ENCODE measurements at regions of chr7 and their contacts with region 1.

Region 1: GRCh38 chr7:94129443-94130140 is 125.4 kb upstream of the BET1 start:
- DNase-seq: no peak
- ATAC-seq: no peak
- H3K4me3 ChIP-seq: no peak overlapping the region
- H3K27ac ChIP-seq: no peak overlapping the region
- H3K4me1 ChIP-seq: no peaks in the 10 kb centered on the region
- H3K27me3 ChIP-seq: no peaks in the 10 kb centered on the region
- CTCF ChIP-seq: no peak
- EP300 ChIP-seq: no peak
- POLR2A ChIP-seq: no peak
- RAD21 ChIP-seq: no peak

Region 2: GRCh38 chr7:94100723-94101345 is 28.8 kb before region 1 on chr7:
- CTCF ChIA-PET with region 1: no interaction called
- POLR2A ChIA-PET with region 1: interaction called, 3 read pairs
- RAD21 ChIA-PET with region 1: interaction called, 4 read pairs
- SMC1A ChIA-PET with region 1: interaction called, 17 read pairs
- in situ Hi-C with region 1: no loop called
- intact Hi-C with region 1: no loop called
- DNase-seq: no peak
- ATAC-seq: no peak
- H3K4me3 ChIP-seq: no peak overlapping the region
- H3K27ac ChIP-seq: no peak overlapping the region
- H3K4me1 ChIP-seq: no peaks in the 10 kb centered on the region
- H3K27me3 ChIP-seq: no peaks in the 10 kb centered on the region
- CTCF ChIP-seq: no peak
- EP300 ChIP-seq: no peak
- POLR2A ChIP-seq: no peak
- RAD21 ChIP-seq: no peak

Region 3: GRCh38 chr7:94142281-94142680 is 12.7 kb after region 1 on chr7:
- CTCF ChIA-PET with region 1: interaction called, 9 read pairs
- POLR2A ChIA-PET with region 1: interaction called, 4 read pairs
- RAD21 ChIA-PET with region 1: interaction called, 4 read pairs
- SMC1A ChIA-PET with region 1: interaction called, 20 read pairs
- in situ Hi-C with region 1: no loop called
- intact Hi-C with region 1: no loop called
- DNase-seq: no peak
- ATAC-seq: no peak
- H3K4me3 ChIP-seq: no peak overlapping the region; the same call in 1 of the 2 replicates
- H3K27ac ChIP-seq: no peak overlapping the region
- H3K4me1 ChIP-seq: no peaks in the 10 kb centered on the region
- H3K27me3 ChIP-seq: no peaks in the 10 kb centered on the region; a peak in 1 of 4 replicates
- CTCF ChIP-seq: no peak
- EP300 ChIP-seq: no peak
- POLR2A ChIP-seq: no peak
- RAD21 ChIP-seq: no peak

Region 4: DNA sequence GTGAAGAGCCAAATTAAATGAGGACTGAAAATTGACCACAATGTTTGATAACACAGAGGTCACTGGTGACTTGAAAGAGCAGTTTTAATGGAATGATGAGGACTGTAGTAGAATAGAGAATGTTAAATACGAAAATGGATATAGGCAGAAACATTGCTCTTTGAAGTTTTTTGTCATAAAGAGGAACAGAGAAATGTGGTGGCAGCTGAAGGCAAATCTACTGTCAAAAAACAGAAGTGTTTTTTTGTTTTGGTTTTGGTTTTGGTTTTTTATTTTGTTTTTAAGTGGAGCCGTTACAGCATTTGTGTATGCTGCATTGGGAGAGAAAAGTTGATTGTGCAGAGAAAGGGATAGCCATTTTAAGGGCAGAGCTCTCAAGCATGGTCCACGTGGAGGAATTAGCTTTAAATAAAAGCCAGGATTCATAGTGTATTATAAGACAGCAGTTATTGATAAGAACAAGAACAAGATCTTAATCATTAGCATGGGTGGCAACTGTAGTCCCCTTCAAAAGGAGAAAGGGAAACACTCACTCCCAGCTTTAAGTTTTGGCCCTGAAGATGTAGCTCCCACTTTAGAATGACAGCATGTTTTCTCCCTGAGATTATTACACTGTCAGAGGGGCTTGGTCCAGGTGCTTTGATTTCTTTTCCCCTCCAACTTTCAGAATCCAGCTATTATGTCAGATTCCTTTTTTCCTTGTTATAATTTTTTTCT is 31.3 kb after region 1 on chr7:
- CTCF ChIA-PET with region 1: interaction called, 5 read pairs
- POLR2A ChIA-PET with region 1: interaction called, 6 read pairs
- RAD21 ChIA-PET with region 1: interaction called, 18 read pairs
- SMC1A ChIA-PET with region 1: interaction called, 27 read pairs
- in situ Hi-C with region 1: no loop called
- intact Hi-C with region 1: no loop called
- DNase-seq: peak; percentile 83
- ATAC-seq: peak; percentile 97
- H3K4me3 ChIP-seq: peak overlapping the region; percentile 25; the same call in 1 of the 2 replicates
- H3K27ac ChIP-seq: peak overlapping the region; percentile 37
- H3K4me1 ChIP-seq: peaks cover 6% of the 10 kb centered on the region
- H3K27me3 ChIP-seq: no peaks in the 10 kb centered on the region
- CTCF ChIP-seq: no peak
- EP300 ChIP-seq: peak; percentile 98 to 99
- POLR2A ChIP-seq: no peak
- RAD21 ChIP-seq: no peak

Region 5: DNA sequence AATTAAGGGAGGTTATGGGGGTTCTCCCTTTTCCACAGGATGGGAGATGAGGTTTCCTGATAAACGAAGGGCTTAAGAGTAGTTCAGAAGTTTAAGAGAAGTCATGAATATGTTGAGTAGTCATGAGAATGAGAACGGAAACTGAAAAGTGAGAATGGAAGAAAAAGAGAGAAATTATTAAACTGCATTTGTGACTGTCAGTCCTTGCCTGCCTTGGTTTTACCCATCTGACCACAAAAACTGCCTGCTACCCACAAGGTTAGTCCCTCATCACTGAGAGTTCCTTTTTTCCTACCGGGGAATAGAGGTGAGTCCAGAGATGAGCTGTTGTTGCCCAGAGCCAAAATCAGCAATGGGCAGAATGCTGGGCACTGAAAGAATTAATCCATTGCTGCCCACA is 48.6 kb after region 1 on chr7:
- CTCF ChIA-PET with region 1: interaction called, 5 read pairs
- POLR2A ChIA-PET with region 1: interaction called, 3 read pairs
- RAD21 ChIA-PET with region 1: interaction called, 3 read pairs
- SMC1A ChIA-PET with region 1: interaction called, 10 read pairs
- in situ Hi-C with region 1: no loop called
- intact Hi-C with region 1: no loop called
- DNase-seq: peak; percentile 75
- ATAC-seq: peak; percentile 96
- H3K4me3 ChIP-seq: peak overlapping the region; percentile 17; the same call in 1 of the 2 replicates
- H3K27ac ChIP-seq: no peak overlapping the region
- H3K4me1 ChIP-seq: peaks cover 9% of the 10 kb centered on the region
- H3K27me3 ChIP-seq: no peaks in the 10 kb centered on the region
- CTCF ChIP-seq: no peak
- EP300 ChIP-seq: peak; percentile 45 to 77; a peak in 3 of 4 replicates
- POLR2A ChIP-seq: no peak
- RAD21 ChIP-seq: no peak

Region 6: DNA sequence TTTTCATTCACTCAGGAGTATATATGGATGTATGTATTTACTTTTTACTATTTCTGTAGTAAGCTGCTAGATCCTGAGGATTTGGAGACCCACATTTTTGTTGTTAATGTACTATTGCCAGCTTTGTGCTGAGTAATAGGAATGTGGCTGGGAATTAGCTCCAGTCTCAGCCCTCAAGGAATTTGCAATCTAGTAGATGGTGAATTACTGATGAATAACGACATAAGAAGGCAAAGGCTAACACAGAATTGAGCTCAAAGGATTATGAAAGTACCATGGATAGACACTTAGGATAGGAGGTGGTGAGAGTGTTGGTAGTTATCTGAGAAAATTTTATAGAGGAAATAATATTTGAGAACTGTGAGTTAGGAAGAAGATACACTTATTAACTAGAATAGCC is 399.9 kb after region 1 on chr7:
- CTCF ChIA-PET with region 1: no interaction called
- POLR2A ChIA-PET with region 1: no interaction called
- RAD21 ChIA-PET with region 1: no interaction called
- SMC1A ChIA-PET with region 1: no interaction called
- in situ Hi-C with region 1: no loop called
- intact Hi-C with region 1: no loop called
- DNase-seq: no peak
- ATAC-seq: no peak
- H3K4me3 ChIP-seq: no peak overlapping the region
- H3K27ac ChIP-seq: no peak overlapping the region
- H3K4me1 ChIP-seq: no peaks in the 10 kb centered on the region
- H3K27me3 ChIP-seq: no peaks in the 10 kb centered on the region
- CTCF ChIP-seq: no peak
- EP300 ChIP-seq: no peak
- POLR2A ChIP-seq: no peak
- RAD21 ChIP-seq: no peak

Measured in GM12878 (cell line).